Dendritic cell treated with granulocyte-macrophage colony-stimulating factor and Interleukin-4, amounts not matched to agents 40 ng/mL and 50 ng/mL, for 4 days (primary cell): ENCODE measurements at regions of chr2 and their contacts with region 1.

Region 1: GRCh38 chr2:207529330-207530159 is at the start of gene CREB1:
- H3K4me3 Mint-ChIP-seq: peak within 1 kb of the TSS; percentile 88
- H3K27ac Mint-ChIP-seq: peak within 1 kb of the TSS; percentile 96
- H3K4me1 Mint-ChIP-seq: peaks cover 47% of the 10 kb centered on the region
- H3K27me3 Mint-ChIP-seq: peaks cover 4% of the 10 kb centered on the region

Region 2: DNA sequence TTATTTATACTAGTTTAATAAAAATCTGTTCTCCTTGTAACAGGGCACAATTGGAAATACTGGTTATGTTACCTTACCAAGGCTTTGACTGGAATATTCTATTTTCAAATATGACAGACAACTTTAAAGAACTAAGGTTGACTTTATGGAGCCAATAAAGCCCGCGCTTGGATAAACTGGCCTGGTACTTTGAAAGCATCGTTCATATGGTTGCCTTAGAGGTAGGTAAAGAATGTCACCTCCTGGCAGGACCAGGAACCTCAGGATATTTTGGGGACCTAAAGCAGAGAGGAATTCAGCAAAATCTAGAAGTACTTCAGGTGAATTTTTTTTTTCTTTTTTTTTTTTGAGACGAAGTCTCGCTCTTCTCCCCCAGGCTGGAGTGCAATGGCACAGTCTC is 71.0 kb before region 1 on chr2:
- intact Hi-C with region 1: no loop called
- H3K4me3 Mint-ChIP-seq: no peak overlapping the region
- H3K27ac Mint-ChIP-seq: no peak overlapping the region
- H3K4me1 Mint-ChIP-seq: peaks cover 14% of the 10 kb centered on the region
- H3K27me3 Mint-ChIP-seq: no peaks in the 10 kb centered on the region

Region 3: GRCh38 chr2:207481924-207482323 is 47.6 kb before region 1 on chr2:
- intact Hi-C with region 1: loop called (anchors 2 kb)
- H3K4me3 Mint-ChIP-seq: no peak overlapping the region
- H3K27ac Mint-ChIP-seq: peak overlapping the region; percentile 48
- H3K4me1 Mint-ChIP-seq: peaks cover 39% of the 10 kb centered on the region
- H3K27me3 Mint-ChIP-seq: no peaks in the 10 kb centered on the region

Region 4: GRCh38 chr2:207502577-207503198 is 26.9 kb before region 1 on chr2:
- intact Hi-C with region 1: loop called (anchors 1 kb)
- H3K4me3 Mint-ChIP-seq: no peak overlapping the region
- H3K27ac Mint-ChIP-seq: peak overlapping the region; percentile 90
- H3K4me1 Mint-ChIP-seq: peaks cover 90% of the 10 kb centered on the region
- H3K27me3 Mint-ChIP-seq: no peaks in the 10 kb centered on the region

Region 5: DNA sequence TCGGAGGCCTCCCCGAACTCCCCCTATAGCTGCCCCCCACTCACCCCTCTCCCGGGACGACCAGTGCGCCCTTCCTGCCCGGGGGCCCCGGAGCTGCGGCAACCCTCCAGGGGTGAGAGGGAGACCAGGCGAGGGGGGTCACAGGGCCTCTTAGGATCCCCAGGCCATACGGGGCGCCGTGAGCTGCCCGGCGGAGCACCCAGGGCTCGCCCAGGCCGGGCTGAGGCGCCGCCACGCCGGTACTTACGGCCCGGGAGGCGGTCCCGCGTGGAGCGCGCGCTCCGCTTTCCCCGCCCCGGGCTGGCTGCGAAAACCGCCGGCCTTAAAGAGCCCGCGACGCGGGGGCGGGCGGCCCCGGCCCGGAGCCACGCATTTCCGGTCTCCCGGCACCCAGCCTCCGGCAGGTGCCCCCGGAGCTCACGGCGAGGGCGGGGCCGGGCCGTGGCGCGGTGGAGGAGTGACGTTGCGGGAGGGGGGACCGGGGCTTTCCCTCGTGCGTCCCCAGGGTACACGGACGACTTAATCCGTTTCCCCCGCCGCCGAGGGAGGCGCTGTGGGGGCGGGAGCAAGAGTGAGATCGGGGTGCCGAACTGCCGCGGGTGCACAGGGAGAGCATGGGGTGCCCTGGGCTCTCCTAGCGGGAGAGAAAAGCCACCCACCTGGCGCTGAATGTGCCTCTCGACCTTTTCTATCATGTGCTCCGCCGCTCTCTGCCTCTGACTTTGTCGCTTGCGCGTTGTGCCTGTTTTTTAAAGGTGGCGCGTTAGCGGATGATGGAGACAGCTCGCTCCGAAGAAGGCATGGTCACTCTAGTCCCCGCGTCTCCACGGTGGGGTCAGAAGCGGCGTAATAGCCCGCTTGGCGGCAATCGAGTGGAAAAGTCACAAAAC is 95.7 kb after region 1 on chr2 and contains the start of gene METTL21A:
- intact Hi-C with region 1: loop called (anchors 2 kb)
- H3K4me3 Mint-ChIP-seq: peak within 1 kb of the TSS; percentile 91
- H3K27ac Mint-ChIP-seq: peak within 1 kb of the TSS; percentile 95
- H3K4me1 Mint-ChIP-seq: peaks cover 45% of the 10 kb centered on the region
- H3K27me3 Mint-ChIP-seq: no peaks in the 10 kb centered on the region

Region 6: DNA sequence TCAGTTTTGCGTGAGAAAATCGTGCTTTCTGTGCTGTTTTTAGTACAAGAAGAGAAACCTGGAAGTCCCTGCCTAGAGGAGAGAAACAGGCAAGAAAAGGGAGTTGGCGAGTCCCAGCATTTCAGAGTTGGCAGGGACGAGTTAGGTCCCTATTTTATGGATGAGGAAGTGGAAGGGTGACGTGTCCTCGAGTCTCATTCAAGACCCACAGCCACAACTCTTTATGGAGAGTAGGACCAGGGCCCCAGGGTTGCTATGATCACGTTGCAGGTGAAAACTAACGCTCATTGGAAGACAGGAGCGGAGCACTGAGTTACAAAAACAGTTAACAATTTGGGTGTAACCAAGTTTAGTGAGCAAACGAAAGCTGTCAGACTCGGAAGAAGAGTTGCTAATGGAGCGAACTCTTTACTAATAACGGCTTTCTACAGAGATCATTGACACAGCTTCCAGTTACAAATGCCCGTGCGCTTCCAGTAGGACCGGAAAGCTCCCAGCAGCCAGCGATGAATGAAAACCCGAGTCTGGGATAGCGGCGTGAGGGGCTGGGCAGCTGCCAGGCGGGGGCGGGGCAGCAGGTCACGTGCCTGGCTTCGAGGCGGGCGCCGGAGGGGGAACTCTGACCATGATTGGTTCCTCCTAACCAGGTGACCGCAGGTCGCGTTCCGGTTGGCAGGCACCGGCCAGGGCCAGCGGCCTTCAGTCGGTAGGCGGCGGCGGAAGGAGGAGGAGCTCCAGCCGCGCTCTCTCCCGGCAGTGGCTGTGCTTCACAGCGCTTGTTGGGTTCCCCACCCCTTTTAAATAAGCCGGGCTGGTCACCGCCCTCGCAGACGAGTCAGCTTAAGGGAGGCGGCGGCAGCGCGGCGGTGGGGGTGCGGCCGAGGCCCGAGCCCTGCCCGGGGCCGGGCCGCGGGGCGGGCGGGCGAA is 181.5 kb after region 1 on chr2 and contains the start of gene CCNYL1:
- intact Hi-C with region 1: loop called (anchors 5 kb)
- H3K4me3 Mint-ChIP-seq: peak within 1 kb of the TSS; percentile 97
- H3K27ac Mint-ChIP-seq: peak within 1 kb of the TSS; percentile 96
- H3K4me1 Mint-ChIP-seq: peaks cover 50% of the 10 kb centered on the region
- H3K27me3 Mint-ChIP-seq: no peaks in the 10 kb centered on the region